H1 (cell line): ENCODE measurements at regions of chr16 and their contacts with region 1.

Region 1: DNA sequence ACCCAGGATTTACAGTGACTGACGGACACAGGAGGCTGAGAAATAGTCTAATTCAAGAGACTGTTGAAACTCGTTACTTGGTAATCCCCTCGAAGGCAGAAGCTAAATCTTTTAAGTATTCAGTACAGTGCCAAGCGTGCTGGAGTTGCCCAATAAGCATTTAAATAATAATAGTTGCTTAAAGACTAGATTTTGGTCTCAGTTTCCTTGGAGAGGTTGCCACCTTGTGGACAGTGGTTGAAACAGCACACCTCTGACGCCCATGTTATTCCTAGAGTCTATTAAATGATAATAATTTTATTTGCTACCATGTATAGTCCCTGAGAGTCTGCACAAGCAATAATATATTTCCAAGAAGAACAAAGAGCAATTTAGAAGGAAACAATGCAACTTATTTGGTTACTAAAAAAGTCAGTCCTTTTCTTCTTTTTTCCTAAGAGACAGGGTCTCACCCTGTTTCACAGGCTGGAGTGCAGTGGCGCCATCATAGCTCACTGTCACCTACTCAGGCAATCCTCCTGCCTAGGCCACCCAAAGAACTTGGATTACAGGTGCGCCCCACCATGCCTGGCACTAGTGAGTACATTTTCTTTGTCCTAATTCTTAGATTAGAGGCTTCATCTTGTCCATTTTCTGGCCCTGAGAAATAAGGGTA is 138.0 kb upstream of the NUDT7 start:
- DNase-seq: peak in 1 of 2 experiments; percentile 59
- H3K4me3 ChIP-seq: no peak overlapping the region
- H3K27ac ChIP-seq: no peak overlapping the region
- H3K4me1 ChIP-seq: peaks cover 0 to 4% (median 0%) of the 10 kb centered on the region in 4 experiments; a peak in 1 of 7 replicates
- H3K27me3 ChIP-seq: peaks cover 0 to 2% (median 0%) of the 10 kb centered on the region in 4 experiments; a peak in 1 of 7 replicates
- CTCF ChIP-seq: peak; percentile 2 to 87 (median 65)
- EP300 ChIP-seq: no peak
- POLR2A ChIP-seq: no peak
- RAD21 ChIP-seq: peak; percentile 96 to 97

Region 2: DNA sequence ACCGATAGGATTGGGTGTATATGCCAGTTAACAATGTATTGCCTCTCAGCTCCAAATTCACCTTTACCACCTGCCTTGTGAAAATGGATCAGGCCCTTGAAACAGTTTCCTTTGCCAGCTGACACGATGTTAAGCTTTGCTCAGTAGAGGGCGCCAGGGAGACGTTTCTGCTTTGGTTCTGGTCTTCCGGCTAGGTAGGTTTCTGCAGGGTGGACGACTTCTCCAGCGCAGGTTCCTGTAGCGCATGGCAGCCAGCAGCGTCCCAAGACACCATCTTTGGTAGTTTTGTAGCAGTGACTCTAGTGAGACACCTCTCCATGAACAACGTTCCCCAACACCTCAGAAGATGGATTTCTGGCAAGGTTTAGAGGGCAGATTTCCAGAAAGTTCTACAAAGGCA is 361.1 kb before region 1 on chr16:
- CTCF ChIA-PET with region 1: interaction called, 27 read pairs
- POLR2A ChIA-PET with region 1: no interaction called
- DNase-seq: peak in 1 of 2 experiments; percentile 81
- H3K4me3 ChIP-seq: no peak overlapping the region
- H3K27ac ChIP-seq: no peak overlapping the region
- H3K4me1 ChIP-seq: peaks cover 0 to 5% (median 2%) of the 10 kb centered on the region in 4 experiments; a peak in 1 of 7 replicates
- H3K27me3 ChIP-seq: no peaks in the 10 kb centered on the region
- CTCF ChIP-seq: peak; percentile 68 to 95 (median 74)
- EP300 ChIP-seq: no peak
- POLR2A ChIP-seq: no peak
- RAD21 ChIP-seq: peak; percentile 38 to 51

Region 3: GRCh38 chr16:77416930-77417480 is 167.3 kb before region 1 on chr16:
- CTCF ChIA-PET with region 1: interaction called, 15 read pairs
- POLR2A ChIA-PET with region 1: no interaction called
- DNase-seq: no peak
- H3K4me3 ChIP-seq: no peak overlapping the region
- H3K27ac ChIP-seq: no peak overlapping the region
- H3K4me1 ChIP-seq: no peaks in the 10 kb centered on the region
- H3K27me3 ChIP-seq: no peaks in the 10 kb centered on the region
- CTCF ChIP-seq: no peak
- EP300 ChIP-seq: no peak
- POLR2A ChIP-seq: no peak
- RAD21 ChIP-seq: no peak

Region 4: GRCh38 chr16:77437859-77438258 is 146.5 kb before region 1 on chr16:
- CTCF ChIA-PET with region 1: interaction called, 223 read pairs
- POLR2A ChIA-PET with region 1: interaction called, 3 read pairs
- DNase-seq: no peak
- H3K4me3 ChIP-seq: no peak overlapping the region
- H3K27ac ChIP-seq: no peak overlapping the region
- H3K4me1 ChIP-seq: peaks cover 0 to 4% (median 3%) of the 10 kb centered on the region in 4 experiments; a peak in 5 of 7 replicates
- H3K27me3 ChIP-seq: peaks cover 12 to 40% (median 33%) of the 10 kb centered on the region in 4 experiments
- CTCF ChIP-seq: peak in 2 of 3 experiments; percentile 52 to 53; a peak in 3 of 4 replicates
- EP300 ChIP-seq: no peak
- POLR2A ChIP-seq: no peak
- RAD21 ChIP-seq: peak; percentile 78 to 81

Region 5: GRCh38 chr16:77499373-77500285 is 84.7 kb before region 1 on chr16:
- CTCF ChIA-PET with region 1: interaction called, 11 read pairs
- POLR2A ChIA-PET with region 1: no interaction called
- DNase-seq: no peak
- H3K4me3 ChIP-seq: no peak overlapping the region
- H3K27ac ChIP-seq: no peak overlapping the region
- H3K4me1 ChIP-seq: peaks cover 0 to 13% (median 1%) of the 10 kb centered on the region in 4 experiments; a peak in 2 of 7 replicates
- H3K27me3 ChIP-seq: no peaks in the 10 kb centered on the region
- CTCF ChIP-seq: no peak
- EP300 ChIP-seq: no peak
- POLR2A ChIP-seq: no peak
- RAD21 ChIP-seq: no peak

Region 6: GRCh38 chr16:77555791-77556190 is 28.5 kb before region 1 on chr16:
- CTCF ChIA-PET with region 1: interaction called, 20 read pairs
- POLR2A ChIA-PET with region 1: no interaction called
- DNase-seq: no peak
- H3K4me3 ChIP-seq: no peak overlapping the region
- H3K27ac ChIP-seq: no peak overlapping the region
- H3K4me1 ChIP-seq: no peaks in the 10 kb centered on the region
- H3K27me3 ChIP-seq: no peaks in the 10 kb centered on the region
- CTCF ChIP-seq: no peak
- EP300 ChIP-seq: no peak
- POLR2A ChIP-seq: no peak
- RAD21 ChIP-seq: no peak

Region 7: DNA sequence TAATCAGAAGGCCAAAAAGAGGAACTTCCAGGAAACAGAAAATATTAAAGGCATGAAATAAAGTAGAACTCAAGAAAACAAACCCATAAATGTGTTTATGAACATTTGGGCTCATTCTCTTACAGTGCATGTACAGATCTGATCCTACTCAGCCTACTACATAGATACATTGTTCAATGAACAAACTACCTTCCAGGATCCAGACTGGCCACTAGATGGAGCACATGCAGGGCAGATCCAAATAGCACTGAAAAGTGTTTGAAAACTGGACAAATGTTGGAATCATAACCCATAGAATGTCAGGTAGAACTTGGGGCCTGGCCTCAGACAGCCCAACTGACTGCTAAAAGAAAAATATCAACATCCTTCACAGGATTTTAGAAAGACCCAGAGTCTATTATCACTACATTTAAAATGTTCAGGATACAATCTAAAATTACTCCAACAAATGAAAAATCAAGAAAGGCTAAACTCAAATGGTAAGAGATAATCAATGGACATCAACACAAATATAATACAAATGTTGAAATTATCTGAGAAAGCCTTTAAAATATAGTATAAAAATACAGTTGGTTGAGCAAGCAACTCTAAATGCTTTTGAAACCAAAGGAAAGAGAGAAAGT is 15.6 kb after region 1 on chr16:
- CTCF ChIA-PET with region 1: interaction called, 38 read pairs
- POLR2A ChIA-PET with region 1: no interaction called
- DNase-seq: no peak
- H3K4me3 ChIP-seq: no peak overlapping the region
- H3K27ac ChIP-seq: no peak overlapping the region
- H3K4me1 ChIP-seq: peaks cover 0 to 6% (median 0%) of the 10 kb centered on the region in 4 experiments; a peak in 1 of 7 replicates
- H3K27me3 ChIP-seq: no peaks in the 10 kb centered on the region
- CTCF ChIP-seq: peak in 2 of 3 experiments; percentile 58 to 77; a peak in 3 of 4 replicates
- EP300 ChIP-seq: no peak
- POLR2A ChIP-seq: no peak
- RAD21 ChIP-seq: peak; percentile 66 to 67

Region 8: DNA sequence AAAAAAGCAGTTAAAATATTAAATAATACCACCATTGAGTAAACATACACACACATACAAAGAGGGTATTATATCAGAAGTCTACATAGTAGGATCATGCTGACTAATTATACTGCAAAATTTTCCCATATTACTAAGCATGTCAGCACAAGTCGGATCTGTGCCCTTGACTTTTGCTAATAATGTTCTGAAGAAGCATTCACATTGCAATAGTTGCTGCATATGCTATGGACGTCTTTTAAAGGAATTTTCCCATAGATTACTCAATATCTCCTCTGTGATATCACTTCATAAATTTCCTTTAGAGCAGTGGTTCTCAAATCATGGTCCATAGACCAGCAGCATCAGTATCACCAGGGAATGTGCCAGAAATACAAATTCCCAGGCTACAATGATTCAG is 27.1 kb after region 1 on chr16:
- CTCF ChIA-PET with region 1: no interaction called
- POLR2A ChIA-PET with region 1: no interaction called
- DNase-seq: no peak
- H3K4me3 ChIP-seq: no peak overlapping the region
- H3K27ac ChIP-seq: no peak overlapping the region
- H3K4me1 ChIP-seq: no peaks in the 10 kb centered on the region
- H3K27me3 ChIP-seq: no peaks in the 10 kb centered on the region
- CTCF ChIP-seq: no peak
- EP300 ChIP-seq: no peak
- POLR2A ChIP-seq: no peak
- RAD21 ChIP-seq: no peak